ENCODE measurements at regions of chr21 and their contacts with region 1.

Region 1: GRCh38 chr21:17501107-17502006 is 11.5 kb upstream of the CXADR start:
- DNase-seq: no peak
- ATAC-seq: no peak
- H3K4me3 ChIP-seq: no peak overlapping the region
- H3K27ac ChIP-seq: no peak overlapping the region
- H3K4me1 ChIP-seq: no peaks in the 10 kb centered on the region
- H3K27me3 ChIP-seq: peaks cover 0 to 2% of the 10 kb centered on the region in 2 donors

Region 2: GRCh38 chr21:17454315-17455027 is 46.9 kb before region 1 on chr21:
- intact Hi-C with region 1: loop called in 1 of 2 experiments (anchors 5 kb)
- DNase-seq: no peak
- ATAC-seq: no peak
- H3K4me3 ChIP-seq: no peak overlapping the region
- H3K27ac ChIP-seq: peak overlapping the region in 1 of 2 donors; percentile 30
- H3K4me1 ChIP-seq: peaks cover 0 to 1% of the 10 kb centered on the region in 2 donors
- H3K27me3 ChIP-seq: no peaks in the 10 kb centered on the region

Measured in aorta (tissue), 5 donors.